ENCODE measurements at regions of chr17 and their contacts with region 1.

Region 1: GRCh38 chr17:42112552-42113176 is at the start of gene DHX58:
- DNase-seq: peak; percentile 89
- ATAC-seq: peak; percentile 86
- H3K4me3 Mint-ChIP-seq: peak within 1 kb of the TSS; percentile 77
- H3K27ac Mint-ChIP-seq: peak within 1 kb of the TSS; percentile 97
- H3K4me1 Mint-ChIP-seq: peaks cover 35% of the 10 kb centered on the region
- H3K27me3 Mint-ChIP-seq: no peaks in the 10 kb centered on the region
- total RNA-seq, gene DHX58: 23.8 to 31.1 TPM

Region 2: GRCh38 chr17:41930009-41930832 is 182.4 kb before region 1 on chr17 and contains the start of gene ODAD4:
- CTCF ChIA-PET with region 1: interaction called, 3 read pairs
- POLR2A ChIA-PET with region 1: no interaction called
- intact Hi-C with region 1: loop called in 1 of 2 experiments (anchors 1 kb)
- DNase-seq: peak; percentile 98
- ATAC-seq: peak; percentile 99
- H3K4me3 Mint-ChIP-seq: peak within 1 kb of the TSS; percentile 96
- H3K27ac Mint-ChIP-seq: peak within 1 kb of the TSS; percentile 98
- H3K4me1 Mint-ChIP-seq: peaks cover 21% of the 10 kb centered on the region
- H3K27me3 Mint-ChIP-seq: no peaks in the 10 kb centered on the region
- total RNA-seq, gene ODAD4: 0.81 to 1.1 TPM

Region 3: GRCh38 chr17:42025191-42025579 is 87.5 kb before region 1 on chr17:
- CTCF ChIA-PET with region 1: interaction called, 22 read pairs
- POLR2A ChIA-PET with region 1: interaction called, 3 read pairs
- intact Hi-C with region 1: loop called (anchors 1 kb)
- DNase-seq: no peak
- ATAC-seq: no peak
- H3K4me3 Mint-ChIP-seq: no peak overlapping the region
- H3K27ac Mint-ChIP-seq: peak overlapping the region; percentile 66
- H3K4me1 Mint-ChIP-seq: peaks cover 23% of the 10 kb centered on the region
- H3K27me3 Mint-ChIP-seq: no peaks in the 10 kb centered on the region

Region 4: DNA sequence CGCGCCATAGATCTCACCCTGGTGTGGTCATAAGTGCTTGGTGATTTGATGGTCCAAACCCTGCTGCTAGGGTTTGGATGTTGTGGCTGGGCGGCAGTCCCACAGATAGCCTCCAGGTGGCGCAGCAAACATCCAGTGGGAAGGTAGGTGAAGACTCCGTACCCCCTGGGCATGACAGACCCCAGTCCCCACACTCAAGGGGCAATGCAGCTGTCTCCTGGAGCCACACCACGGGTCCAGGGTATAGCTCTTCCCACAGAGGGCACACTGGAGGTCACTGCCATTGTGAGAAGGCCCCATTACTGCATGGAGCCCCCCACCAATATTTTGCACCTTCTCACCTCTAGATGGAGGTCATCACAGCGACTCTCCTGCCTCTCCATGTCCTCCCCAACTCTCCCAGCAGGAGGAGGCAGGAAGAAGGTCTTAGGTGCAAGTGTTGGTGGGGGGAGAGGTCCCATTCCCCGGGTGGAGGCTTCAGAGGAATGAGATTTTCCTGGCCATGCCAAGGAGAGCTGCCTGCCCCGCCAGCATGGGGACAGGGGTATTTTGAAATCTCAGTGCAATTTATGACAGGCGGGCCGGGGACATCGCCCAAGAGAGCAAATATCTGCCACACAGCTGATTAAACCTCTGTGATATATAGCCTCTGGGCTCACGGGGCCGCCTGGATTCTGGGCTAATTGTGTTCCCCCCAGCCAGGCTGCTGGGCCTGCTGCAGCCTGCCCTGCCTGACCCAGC is 45.1 kb before region 1 on chr17:
- CTCF ChIA-PET with region 1: interaction called, 9 read pairs
- POLR2A ChIA-PET with region 1: no interaction called
- intact Hi-C with region 1: loop called (anchors 1 kb)
- DNase-seq: peak; percentile 85
- ATAC-seq: peak; percentile 62
- H3K4me3 Mint-ChIP-seq: no peak overlapping the region
- H3K27ac Mint-ChIP-seq: no peak overlapping the region
- H3K4me1 Mint-ChIP-seq: peaks cover 21% of the 10 kb centered on the region
- H3K27me3 Mint-ChIP-seq: peaks cover 9% of the 10 kb centered on the region

Region 5: DNA sequence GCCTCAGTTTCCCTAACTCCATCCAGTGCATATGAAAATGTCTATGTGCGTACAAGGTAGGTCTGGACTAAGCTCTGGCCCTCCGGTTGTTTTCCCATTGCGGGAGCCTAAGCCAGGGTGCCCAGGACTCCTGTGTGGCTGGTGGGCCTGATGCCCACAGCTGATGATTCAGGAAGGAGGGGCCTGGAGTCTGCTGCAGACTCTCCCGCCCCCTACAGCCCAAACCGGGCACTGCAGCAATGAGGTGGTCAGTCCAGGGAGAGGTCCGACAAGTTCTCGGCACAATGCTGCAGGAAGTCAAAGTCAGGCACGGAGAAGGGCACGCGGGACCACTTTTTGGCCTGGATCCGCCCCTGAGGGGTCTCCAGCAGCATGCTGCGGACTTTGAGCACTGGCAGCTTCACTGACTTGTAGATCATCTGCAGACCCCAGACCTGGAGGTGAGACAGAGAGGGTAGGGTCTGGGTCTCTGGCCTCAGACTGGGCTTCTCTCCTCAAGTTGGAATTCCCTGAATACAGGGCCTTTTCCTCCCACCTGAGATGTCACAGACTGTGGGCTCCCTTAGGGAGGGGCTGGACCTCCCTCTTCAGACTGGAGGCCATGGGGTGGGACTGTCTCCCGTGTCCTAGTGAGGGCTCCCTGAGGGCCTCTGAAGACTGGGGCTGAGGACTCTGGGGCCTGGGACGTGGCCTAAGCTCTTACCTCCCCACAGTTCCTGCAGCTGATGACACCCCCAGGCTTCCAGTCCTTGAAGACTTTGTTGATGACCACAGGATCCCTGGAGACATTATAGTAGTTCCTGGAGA is 10.9 kb before region 1 on chr17:
- CTCF ChIA-PET with region 1: interaction called, 12 read pairs
- POLR2A ChIA-PET with region 1: interaction called, 3 read pairs
- intact Hi-C with region 1: loop called (anchors 1 kb)
- DNase-seq: peak; percentile 88
- ATAC-seq: peak; percentile 73
- H3K4me3 Mint-ChIP-seq: no peak overlapping the region
- H3K27ac Mint-ChIP-seq: no peak overlapping the region
- H3K4me1 Mint-ChIP-seq: peaks cover 8% of the 10 kb centered on the region
- H3K27me3 Mint-ChIP-seq: peaks cover 12% of the 10 kb centered on the region

Region 6: GRCh38 chr17:42260318-42260717 is 147.7 kb after region 1 on chr17:
- CTCF ChIA-PET with region 1: no interaction called
- POLR2A ChIA-PET with region 1: no interaction called
- intact Hi-C with region 1: no loop called
- DNase-seq: no peak
- ATAC-seq: no peak
- H3K4me3 Mint-ChIP-seq: no peak overlapping the region
- H3K27ac Mint-ChIP-seq: no peak overlapping the region
- H3K4me1 Mint-ChIP-seq: peaks cover 39% of the 10 kb centered on the region
- H3K27me3 Mint-ChIP-seq: no peaks in the 10 kb centered on the region

Region 7: GRCh38 chr17:42287926-42288802 is 175.5 kb after region 1 on chr17 and contains the start of gene STAT5A:
- CTCF ChIA-PET with region 1: no interaction called
- POLR2A ChIA-PET with region 1: no interaction called
- intact Hi-C with region 1: loop called in 1 of 2 experiments (anchors 5 kb)
- DNase-seq: peak; percentile 90
- ATAC-seq: peak; percentile 65
- H3K4me3 Mint-ChIP-seq: peak within 1 kb of the TSS; percentile 81
- H3K27ac Mint-ChIP-seq: peak within 1 kb of the TSS; percentile 96
- H3K4me1 Mint-ChIP-seq: peaks cover 63% of the 10 kb centered on the region
- H3K27me3 Mint-ChIP-seq: no peaks in the 10 kb centered on the region
- total RNA-seq, gene STAT5A: 178 to 203 TPM